Activated CD4-positive, alpha-beta T cell treated with anti-CD3 and anti-CD28 coated beads for 36 hours (primary cell): ENCODE measurements at regions of chr17 and their contacts with region 1.

Region 1: GRCh38 chr17:48047741-48048383 is at the start of gene NFE2L1:
- DNase-seq: peak; percentile 99
- ATAC-seq: peak; percentile 97
- H3K4me3 Mint-ChIP-seq: peak within 1 kb of the TSS; percentile 88
- H3K27ac Mint-ChIP-seq: peak within 1 kb of the TSS; percentile 96
- H3K4me1 Mint-ChIP-seq: peaks cover 45% of the 10 kb centered on the region
- H3K27me3 Mint-ChIP-seq: no peaks in the 10 kb centered on the region
- total RNA-seq, gene NFE2L1: 100 to 127 TPM

Region 2: GRCh38 chr17:47895856-47896671 is 151.8 kb before region 1 on chr17 and contains the start of gene SP2:
- CTCF ChIA-PET with region 1: no interaction called
- POLR2A ChIA-PET with region 1: no interaction called
- intact Hi-C with region 1: loop called in 1 of 2 experiments (anchors 1 kb)
- DNase-seq: peak; percentile 99
- ATAC-seq: peak; percentile 94
- H3K4me3 Mint-ChIP-seq: peak within 1 kb of the TSS; percentile 96
- H3K27ac Mint-ChIP-seq: peak within 1 kb of the TSS; percentile 96
- H3K4me1 Mint-ChIP-seq: peaks cover 46% of the 10 kb centered on the region
- H3K27me3 Mint-ChIP-seq: no peaks in the 10 kb centered on the region
- total RNA-seq, gene SP2: 15.7 to 19.8 TPM

Region 3: DNA sequence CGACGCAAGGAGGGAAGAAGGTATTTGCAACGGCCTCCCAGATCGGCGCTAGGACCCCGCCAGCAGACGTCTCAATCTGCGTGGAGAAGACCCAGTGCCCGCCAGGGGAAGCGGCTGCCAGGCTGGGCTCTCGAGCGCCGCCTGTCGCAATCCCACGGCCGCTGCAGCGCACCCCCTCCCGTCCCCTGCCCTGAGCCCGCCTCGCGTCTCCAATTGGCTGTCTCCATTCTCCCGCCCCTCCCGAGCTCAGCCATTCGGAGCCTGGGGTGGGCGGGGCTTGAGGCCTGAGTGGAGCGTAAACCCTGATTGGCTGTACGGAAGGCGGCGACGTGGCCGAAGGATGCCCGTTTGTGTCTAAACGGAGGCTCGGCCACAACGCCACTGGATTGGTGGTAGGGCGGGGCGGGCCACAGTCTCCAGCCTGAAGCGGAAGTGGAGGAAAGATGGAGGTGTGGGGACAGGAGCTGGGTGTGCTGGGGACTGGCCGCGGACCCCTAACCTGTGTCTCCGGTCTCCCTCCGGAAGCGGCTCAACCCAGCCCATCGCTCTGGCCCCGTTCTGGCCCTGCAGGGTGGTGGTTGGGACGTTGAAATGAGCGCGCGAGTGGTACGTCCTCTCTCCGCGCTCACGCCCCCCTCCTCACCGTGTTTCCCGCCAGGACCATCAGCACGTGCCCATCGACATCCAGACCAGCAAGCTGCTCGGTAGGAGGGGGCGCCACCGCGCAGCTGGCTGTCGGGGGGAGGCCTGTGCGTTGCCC is 77.0 kb before region 1 on chr17 and contains the start of gene CDK5RAP3:
- CTCF ChIA-PET with region 1: no interaction called
- POLR2A ChIA-PET with region 1: no interaction called
- intact Hi-C with region 1: loop called (anchors 1 to 2 kb)
- DNase-seq: peak; percentile 100
- ATAC-seq: peak; percentile 100
- H3K4me3 Mint-ChIP-seq: peak within 1 kb of the TSS; percentile 97
- H3K27ac Mint-ChIP-seq: peak within 1 kb of the TSS; percentile 94
- H3K4me1 Mint-ChIP-seq: peaks cover 21% of the 10 kb centered on the region
- H3K27me3 Mint-ChIP-seq: no peaks in the 10 kb centered on the region
- total RNA-seq, gene CDK5RAP3: 147 to 156 TPM

Region 4: GRCh38 chr17:48060249-48060648 is 12.4 kb after region 1 on chr17:
- CTCF ChIA-PET with region 1: interaction called, 10 read pairs
- POLR2A ChIA-PET with region 1: interaction called, 11 read pairs
- intact Hi-C with region 1: no loop called
- DNase-seq: no peak
- ATAC-seq: no peak
- H3K4me3 Mint-ChIP-seq: no peak overlapping the region
- H3K27ac Mint-ChIP-seq: peak overlapping the region; percentile 49
- H3K4me1 Mint-ChIP-seq: peaks cover 18% of the 10 kb centered on the region
- H3K27me3 Mint-ChIP-seq: no peaks in the 10 kb centered on the region

Region 5: GRCh38 chr17:48101012-48101720 is 53.3 kb after region 1 on chr17 and contains the start of gene CBX1:
- CTCF ChIA-PET with region 1: interaction called, 3 read pairs
- POLR2A ChIA-PET with region 1: interaction called, 4 read pairs
- intact Hi-C with region 1: loop called (anchors 1 kb)
- DNase-seq: peak; percentile 97
- ATAC-seq: peak; percentile 95
- H3K4me3 Mint-ChIP-seq: peak within 1 kb of the TSS; percentile 99
- H3K27ac Mint-ChIP-seq: peak within 1 kb of the TSS; percentile 83
- H3K4me1 Mint-ChIP-seq: peaks cover 41% of the 10 kb centered on the region
- H3K27me3 Mint-ChIP-seq: no peaks in the 10 kb centered on the region
- total RNA-seq, gene CBX1: 58.6 to 66.0 TPM

Region 6: GRCh38 chr17:48915459-48916282 is 867.8 kb after region 1 on chr17:
- CTCF ChIA-PET with region 1: no interaction called
- POLR2A ChIA-PET with region 1: no interaction called
- intact Hi-C with region 1: loop called in 1 of 2 experiments (anchors 2 kb)
- DNase-seq: peak; percentile 77
- ATAC-seq: peak; percentile 95
- H3K4me3 Mint-ChIP-seq: peak overlapping the region; percentile 73
- H3K27ac Mint-ChIP-seq: peak overlapping the region; percentile 96
- H3K4me1 Mint-ChIP-seq: peaks cover 59% of the 10 kb centered on the region
- H3K27me3 Mint-ChIP-seq: no peaks in the 10 kb centered on the region